Activated T-helper 1 cell treated with anti-CD3 and anti-CD28 coated beads, Interleukin-12 subunit alpha, Interleukin-12 subunit beta, Interleukin-2, Interleukin-4 antibody, amounts not matched to agents 30 ng/mL and 10 ng/mL and 1 ng/mL, durations not matched to agents 14 hours and 24 hours and 36 hours (primary cell): ENCODE measurements at regions of chr20 and their contacts with region 1.

Region 1: GRCh38 chr20:51480507-51481270 is 61.8 kb downstream of the NFATC2 start:
- DNase-seq: peak; percentile 52
- H3K4me3 Mint-ChIP-seq: peak overlapping the region; percentile 61
- H3K27ac Mint-ChIP-seq: peak overlapping the region; percentile 84
- H3K4me1 Mint-ChIP-seq: peaks cover 94% of the 10 kb centered on the region
- H3K27me3 Mint-ChIP-seq: no peaks in the 10 kb centered on the region

Region 2: DNA sequence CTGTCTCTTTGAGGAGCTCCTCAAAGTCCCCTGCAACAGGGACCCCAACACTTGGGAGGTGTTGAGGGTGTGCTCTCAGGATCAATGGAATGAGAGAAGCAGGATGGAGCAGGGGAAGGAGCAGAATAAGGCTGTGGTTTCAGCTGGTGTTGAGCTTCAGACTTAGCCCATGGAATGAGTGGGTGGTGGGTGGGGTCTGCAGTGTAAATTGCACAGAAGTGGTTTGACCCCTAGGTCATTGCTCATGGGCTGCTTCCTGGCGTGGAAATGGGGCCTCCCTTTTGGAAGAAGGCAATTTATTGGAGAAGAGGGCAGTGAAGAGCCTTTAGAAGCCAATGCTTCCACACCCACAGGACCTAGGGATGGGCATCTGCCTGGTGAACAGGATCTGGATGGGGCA is 420.8 kb before region 1 on chr20:
- intact Hi-C with region 1: loop called (anchors 1 kb)
- DNase-seq: no peak
- H3K4me3 Mint-ChIP-seq: no peak overlapping the region
- H3K27ac Mint-ChIP-seq: no peak overlapping the region
- H3K4me1 Mint-ChIP-seq: peaks cover 32% of the 10 kb centered on the region
- H3K27me3 Mint-ChIP-seq: peaks cover 10% of the 10 kb centered on the region

Region 3: GRCh38 chr20:51423290-51423667 is 57.4 kb before region 1 on chr20:
- intact Hi-C with region 1: loop called (anchors 1 kb)
- DNase-seq: no peak
- H3K4me3 Mint-ChIP-seq: peak overlapping the region; percentile 22
- H3K27ac Mint-ChIP-seq: peak overlapping the region; percentile 72
- H3K4me1 Mint-ChIP-seq: peaks cover 77% of the 10 kb centered on the region
- H3K27me3 Mint-ChIP-seq: no peaks in the 10 kb centered on the region

Region 4: GRCh38 chr20:51512645-51513044 is 32.0 kb after region 1 on chr20:
- intact Hi-C with region 1: loop called (anchors 1 kb)
- DNase-seq: no peak
- H3K4me3 Mint-ChIP-seq: peak overlapping the region; percentile 1
- H3K27ac Mint-ChIP-seq: peak overlapping the region; percentile 70
- H3K4me1 Mint-ChIP-seq: peaks cover 70% of the 10 kb centered on the region
- H3K27me3 Mint-ChIP-seq: no peaks in the 10 kb centered on the region

Region 5: GRCh38 chr20:51595058-51595532 is 114.4 kb after region 1 on chr20:
- intact Hi-C with region 1: loop called (anchors 1 kb)
- DNase-seq: peak; percentile 67
- H3K4me3 Mint-ChIP-seq: peak overlapping the region; percentile 54
- H3K27ac Mint-ChIP-seq: peak overlapping the region; percentile 82
- H3K4me1 Mint-ChIP-seq: peaks cover 46% of the 10 kb centered on the region
- H3K27me3 Mint-ChIP-seq: peaks cover 3% of the 10 kb centered on the region

Region 6: GRCh38 chr20:52047811-52048764 is 567.4 kb after region 1 on chr20:
- intact Hi-C with region 1: loop called (anchors 5 kb)
- DNase-seq: peak; percentile 38
- H3K4me3 Mint-ChIP-seq: peak overlapping the region; percentile 48
- H3K27ac Mint-ChIP-seq: peak overlapping the region; percentile 84
- H3K4me1 Mint-ChIP-seq: peaks cover 34% of the 10 kb centered on the region
- H3K27me3 Mint-ChIP-seq: peaks cover 1% of the 10 kb centered on the region